Left ventricle myocardium inferior (tissue), 1 donor: ENCODE measurements at regions of chr16 and their contacts with region 1.

Region 1: GRCh38 chr16:31032736-31033708 is at the start of gene STX4:
- DNase-seq: peak; percentile 98
- H3K4me3 ChIP-seq: peak within 1 kb of the TSS; percentile 92
- H3K27ac ChIP-seq: peak within 1 kb of the TSS; percentile 92
- H3K4me1 ChIP-seq: peaks cover 41% of the 10 kb centered on the region
- H3K27me3 ChIP-seq: no peaks in the 10 kb centered on the region
- CTCF ChIP-seq: no peak
- total RNA-seq, gene STX4: 43.1 TPM

Region 2: GRCh38 chr16:31073968-31074813 is 41.2 kb after region 1 on chr16 and contains the starts of genes ZNF646 and ZNF668:
- intact Hi-C with region 1: loop called (anchors 5 kb)
- DNase-seq: peak; percentile 98
- H3K4me3 ChIP-seq: peak within 1 kb of the TSS; percentile 93
- H3K27ac ChIP-seq: peak within 1 kb of the TSS; percentile 92
- H3K4me1 ChIP-seq: peaks cover 43% of the 10 kb centered on the region
- H3K27me3 ChIP-seq: no peaks in the 10 kb centered on the region
- CTCF ChIP-seq: no peak
- total RNA-seq, gene ZNF646: 9.6 TPM
- total RNA-seq, gene ZNF668: 5.3 TPM